ENCODE measurements at regions of chr13 and their contacts with region 1.

Region 1: DNA sequence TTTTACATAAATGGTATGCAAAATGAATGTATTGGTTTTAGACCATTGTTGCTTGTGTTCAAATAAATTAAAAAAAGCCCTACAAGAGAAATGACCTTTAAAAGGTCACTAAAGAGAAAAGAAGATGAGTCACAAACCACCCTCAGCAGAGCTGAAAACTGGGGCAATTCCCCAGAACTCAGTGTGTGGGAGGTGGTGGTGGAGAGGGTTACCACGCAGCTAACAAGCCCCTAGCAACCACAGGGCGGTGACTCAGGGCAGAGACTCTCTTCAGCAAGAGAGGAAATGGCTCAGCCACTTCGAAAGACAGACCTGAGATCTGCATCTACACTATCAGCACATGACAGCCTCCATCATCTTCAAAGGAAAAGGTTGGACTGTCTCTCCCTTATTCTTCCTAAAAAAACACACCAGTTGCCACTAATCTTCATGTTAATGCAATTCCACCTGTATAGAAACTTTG is 29.4 kb upstream of the NDFIP2 start:
- DNase-seq: peak; percentile 96
- H3K4me3 Mint-ChIP-seq: peak overlapping the region; percentile 86
- H3K27ac Mint-ChIP-seq: peak overlapping the region; percentile 99
- H3K4me1 Mint-ChIP-seq: peaks cover 66% of the 10 kb centered on the region
- H3K27me3 Mint-ChIP-seq: no peaks in the 10 kb centered on the region

Region 2: GRCh38 chr13:79194272-79194671 is 257.3 kb before region 1 on chr13:
- intact Hi-C with region 1: loop called (anchors 10 kb)
- DNase-seq: peak; percentile 89
- H3K4me3 Mint-ChIP-seq: peak overlapping the region; percentile 60
- H3K27ac Mint-ChIP-seq: peak overlapping the region; percentile 39
- H3K4me1 Mint-ChIP-seq: peaks cover 50% of the 10 kb centered on the region
- H3K27me3 Mint-ChIP-seq: peaks cover 2% of the 10 kb centered on the region

Region 3: GRCh38 chr13:79435561-79435990 is 16.0 kb before region 1 on chr13:
- intact Hi-C with region 1: loop called (anchors 2 kb)
- DNase-seq: no peak
- H3K4me3 Mint-ChIP-seq: no peak overlapping the region
- H3K27ac Mint-ChIP-seq: no peak overlapping the region
- H3K4me1 Mint-ChIP-seq: peaks cover 17% of the 10 kb centered on the region
- H3K27me3 Mint-ChIP-seq: no peaks in the 10 kb centered on the region

Measured in activated CD4-positive, alpha-beta T cell treated with anti-CD3 and anti-CD28 coated beads, Interleukin-2, amount 10 ng/mL, durations not matched to agents 24 days and 14 days (primary cell).